Activated CD4-positive, alpha-beta T cell treated with anti-CD3 and anti-CD28 coated beads for 36 hours (primary cell): ENCODE measurements at regions of chrX and their contacts with region 1.

Region 1: GRCh38 chrX:75156021-75156945 is at the start of gene ABCB7:
- DNase-seq: peak; percentile 72
- ATAC-seq: peak; percentile 84
- H3K4me3 Mint-ChIP-seq: peak within 1 kb of the TSS; percentile 83
- H3K27ac Mint-ChIP-seq: peak within 1 kb of the TSS; percentile 98
- H3K4me1 Mint-ChIP-seq: peaks cover 48% of the 10 kb centered on the region
- H3K27me3 Mint-ChIP-seq: no peaks in the 10 kb centered on the region
- total RNA-seq, gene ABCB7: 52.6 to 54.5 TPM

Region 2: GRCh38 chrX:74536152-74536831 is 620.0 kb before region 1 on chrX:
- CTCF ChIA-PET with region 1: no interaction called
- POLR2A ChIA-PET with region 1: no interaction called
- intact Hi-C with region 1: loop called in 1 of 2 experiments (anchors 10 kb)
- DNase-seq: peak; percentile 51
- ATAC-seq: peak; percentile 30
- H3K4me3 Mint-ChIP-seq: peak overlapping the region; percentile 66
- H3K27ac Mint-ChIP-seq: peak overlapping the region; percentile 74
- H3K4me1 Mint-ChIP-seq: peaks cover 36% of the 10 kb centered on the region
- H3K27me3 Mint-ChIP-seq: no peaks in the 10 kb centered on the region

Region 3: DNA sequence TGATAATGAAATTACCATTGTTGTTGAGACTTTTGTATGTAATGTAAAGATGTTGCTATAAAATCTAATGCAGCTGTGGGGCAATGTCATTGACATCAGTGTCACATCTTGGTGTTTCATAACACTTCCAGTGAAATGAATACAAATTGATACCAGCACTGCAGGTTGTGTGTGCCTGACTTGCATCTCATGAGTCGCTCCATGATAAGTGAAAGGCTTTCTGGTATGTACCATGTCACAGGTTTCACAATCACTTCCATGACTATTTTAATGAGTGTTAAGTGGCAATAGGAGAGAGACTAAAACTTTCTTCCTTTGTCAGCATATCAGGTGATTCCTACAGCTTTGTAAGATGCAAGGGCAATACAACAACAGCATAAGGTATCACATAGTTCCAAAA is 94.6 kb before region 1 on chrX:
- CTCF ChIA-PET with region 1: no interaction called
- POLR2A ChIA-PET with region 1: no interaction called
- intact Hi-C with region 1: loop called in 1 of 2 experiments (anchors 5 kb)
- DNase-seq: peak; percentile 9
- ATAC-seq: peak; percentile 92
- H3K4me3 Mint-ChIP-seq: no peak overlapping the region
- H3K27ac Mint-ChIP-seq: peak overlapping the region; percentile 73
- H3K4me1 Mint-ChIP-seq: peaks cover 4% of the 10 kb centered on the region
- H3K27me3 Mint-ChIP-seq: no peaks in the 10 kb centered on the region

Region 4: DNA sequence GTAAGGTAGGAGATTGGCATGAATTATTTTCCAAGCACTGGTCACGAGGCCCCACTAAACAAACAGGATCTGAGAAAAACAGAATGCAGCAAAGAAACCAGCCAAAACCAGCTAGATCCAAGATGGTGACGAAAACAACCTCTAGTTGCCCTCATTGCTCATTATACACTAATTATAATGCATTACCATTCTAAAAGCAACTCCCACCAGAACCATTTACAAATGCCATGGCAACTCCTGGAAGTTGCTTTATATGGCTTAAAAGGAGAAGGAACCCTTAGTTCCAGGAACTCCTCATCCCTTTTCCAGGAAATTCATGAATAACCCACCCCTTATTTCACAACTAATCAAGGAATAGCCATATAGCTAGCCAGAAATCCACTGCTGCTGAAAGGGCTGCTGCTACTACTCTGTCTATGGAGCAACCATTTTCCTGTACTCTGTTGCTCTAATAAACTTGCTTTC is 69.5 kb before region 1 on chrX:
- CTCF ChIA-PET with region 1: no interaction called
- POLR2A ChIA-PET with region 1: no interaction called
- intact Hi-C with region 1: no loop called
- DNase-seq: no peak
- ATAC-seq: no peak
- H3K4me3 Mint-ChIP-seq: no peak overlapping the region
- H3K27ac Mint-ChIP-seq: no peak overlapping the region
- H3K4me1 Mint-ChIP-seq: peaks cover 16% of the 10 kb centered on the region
- H3K27me3 Mint-ChIP-seq: no peaks in the 10 kb centered on the region

Region 5: GRCh38 chrX:75229774-75230173 is 73.5 kb after region 1 on chrX:
- CTCF ChIA-PET with region 1: no interaction called
- POLR2A ChIA-PET with region 1: no interaction called
- intact Hi-C with region 1: no loop called
- DNase-seq: peak; percentile 31
- ATAC-seq: peak; percentile 57
- H3K4me3 Mint-ChIP-seq: no peak overlapping the region
- H3K27ac Mint-ChIP-seq: no peak overlapping the region
- H3K4me1 Mint-ChIP-seq: peaks cover 4% of the 10 kb centered on the region
- H3K27me3 Mint-ChIP-seq: no peaks in the 10 kb centered on the region

Region 6: GRCh38 chrX:76148753-76149152 is 992.5 kb after region 1 on chrX:
- CTCF ChIA-PET with region 1: no interaction called
- POLR2A ChIA-PET with region 1: no interaction called
- intact Hi-C with region 1: loop called in 1 of 2 experiments (anchors 5 kb)
- DNase-seq: peak; percentile 62
- ATAC-seq: peak; percentile 34
- H3K4me3 Mint-ChIP-seq: peak overlapping the region; percentile 73
- H3K27ac Mint-ChIP-seq: peak overlapping the region; percentile 99
- H3K4me1 Mint-ChIP-seq: peaks cover 13% of the 10 kb centered on the region
- H3K27me3 Mint-ChIP-seq: no peaks in the 10 kb centered on the region

Region 7: DNA sequence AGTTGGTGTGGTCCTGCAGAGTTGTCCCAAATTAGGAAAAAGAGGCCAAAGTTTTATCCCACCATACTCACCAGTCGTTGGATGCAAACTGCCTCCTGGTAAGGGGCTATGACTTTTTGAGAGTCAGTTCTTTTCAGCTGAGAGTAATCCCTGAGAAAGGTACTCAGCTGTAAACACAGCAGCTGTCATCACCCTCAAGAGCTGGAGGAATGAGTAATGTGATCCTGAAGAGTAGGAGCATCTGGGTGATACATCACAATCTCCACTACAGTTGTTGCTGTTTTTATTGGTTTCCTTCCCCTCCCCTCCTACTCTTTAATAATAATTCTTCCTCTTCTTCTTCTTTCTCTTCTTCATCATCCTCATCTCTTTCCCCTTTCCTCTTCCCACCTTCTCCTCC is 1276.9 kb after region 1 on chrX:
- CTCF ChIA-PET with region 1: no interaction called
- POLR2A ChIA-PET with region 1: no interaction called
- intact Hi-C with region 1: loop called in 1 of 2 experiments (anchors 10 kb)
- DNase-seq: no peak
- ATAC-seq: peak; percentile 63
- H3K4me3 Mint-ChIP-seq: no peak overlapping the region
- H3K27ac Mint-ChIP-seq: no peak overlapping the region
- H3K4me1 Mint-ChIP-seq: peaks cover 38% of the 10 kb centered on the region
- H3K27me3 Mint-ChIP-seq: no peaks in the 10 kb centered on the region